ENCODE measurements at regions of chr4 and their contacts with region 1.

Region 1: GRCh38 chr4:189124149-189124758 is 816.4 kb upstream of the FRG1 start:
- DNase-seq: peak; percentile 47
- H3K4me3 Mint-ChIP-seq: no peak overlapping the region
- H3K27ac Mint-ChIP-seq: no peak overlapping the region
- H3K4me1 Mint-ChIP-seq: no peaks in the 10 kb centered on the region
- H3K27me3 Mint-ChIP-seq: no peaks in the 10 kb centered on the region
- CTCF ChIP-seq: peak; percentile 71

Region 2: DNA sequence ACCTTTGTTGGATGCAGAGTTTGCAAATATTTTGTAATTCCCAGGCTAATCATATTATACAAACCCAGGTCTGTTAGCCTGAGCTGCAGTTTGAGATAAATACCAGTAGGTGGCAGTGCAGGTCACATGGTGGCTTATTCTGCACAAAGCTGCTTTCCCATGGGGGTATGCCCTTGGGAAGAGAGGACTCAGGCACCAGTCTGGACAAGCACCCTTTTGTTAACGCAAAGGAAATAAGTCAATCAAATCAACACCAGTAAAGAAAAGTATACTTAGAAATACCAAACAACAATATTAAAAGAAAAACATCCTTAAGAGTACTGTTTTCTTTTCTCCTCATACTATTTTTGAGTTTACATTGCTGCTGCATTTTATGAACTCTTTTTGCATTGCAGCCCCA is 1517.7 kb before region 1 on chr4:
- CTCF ChIA-PET with region 1: interaction called, 4 read pairs
- POLR2A ChIA-PET with region 1: no interaction called
- intact Hi-C with region 1: loop called (anchors 1 kb)
- DNase-seq: peak; percentile 71
- H3K4me3 Mint-ChIP-seq: no peak overlapping the region
- H3K27ac Mint-ChIP-seq: no peak overlapping the region
- H3K4me1 Mint-ChIP-seq: peaks cover 25% of the 10 kb centered on the region
- H3K27me3 Mint-ChIP-seq: no peaks in the 10 kb centered on the region
- CTCF ChIP-seq: peak; percentile 90

Region 3: DNA sequence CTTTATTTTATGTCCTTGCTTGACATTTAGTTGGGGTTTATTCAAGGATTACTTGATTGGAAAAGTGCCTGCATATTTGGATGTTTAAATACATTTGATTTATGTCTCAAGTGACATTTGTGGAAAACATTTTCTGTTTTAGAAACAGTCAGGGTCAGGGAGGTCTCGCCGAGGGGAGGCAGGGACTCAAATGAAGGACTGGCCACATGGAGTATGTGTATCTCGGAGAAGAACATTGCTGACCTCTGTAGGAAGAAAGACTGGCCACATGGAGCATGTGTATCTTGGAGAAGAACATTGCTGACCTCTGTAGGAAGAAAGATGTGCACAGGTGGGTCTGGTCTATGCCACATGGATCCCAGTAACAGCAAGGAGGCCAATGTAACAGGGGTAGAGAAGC is 751.4 kb before region 1 on chr4:
- CTCF ChIA-PET with region 1: no interaction called
- POLR2A ChIA-PET with region 1: no interaction called
- intact Hi-C with region 1: loop called (anchors 1 kb)
- DNase-seq: peak; percentile 59
- H3K4me3 Mint-ChIP-seq: no peak overlapping the region
- H3K27ac Mint-ChIP-seq: peak overlapping the region; percentile 68
- H3K4me1 Mint-ChIP-seq: peaks cover 5% of the 10 kb centered on the region
- H3K27me3 Mint-ChIP-seq: no peaks in the 10 kb centered on the region
- CTCF ChIP-seq: peak; percentile 53

Region 4: DNA sequence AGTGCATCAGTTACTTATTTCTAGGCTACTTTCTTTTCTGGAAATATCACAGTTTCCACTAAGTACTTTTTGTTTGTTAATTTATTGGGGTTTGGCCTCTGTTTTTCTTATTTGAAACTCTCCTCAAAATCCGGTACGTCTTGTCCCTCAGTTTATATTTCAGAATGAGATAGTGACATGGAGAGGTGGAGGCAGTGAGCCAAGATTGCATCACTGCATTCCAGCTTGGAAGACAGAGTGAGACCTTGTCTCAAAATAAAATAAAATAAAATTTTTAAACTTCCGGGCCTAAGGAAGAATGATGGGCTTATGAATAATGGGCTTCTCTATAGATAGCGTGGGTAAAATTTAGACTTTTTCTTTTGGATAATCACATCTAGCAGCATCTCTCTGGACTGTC is 417.2 kb before region 1 on chr4:
- CTCF ChIA-PET with region 1: interaction called, 4 read pairs
- POLR2A ChIA-PET with region 1: no interaction called
- intact Hi-C with region 1: loop called (anchors 10 kb)
- DNase-seq: no peak
- H3K4me3 Mint-ChIP-seq: no peak overlapping the region
- H3K27ac Mint-ChIP-seq: peak overlapping the region; percentile 82
- H3K4me1 Mint-ChIP-seq: peaks cover 16% of the 10 kb centered on the region
- H3K27me3 Mint-ChIP-seq: no peaks in the 10 kb centered on the region
- CTCF ChIP-seq: no peak

Region 5: GRCh38 chr4:188971125-188971524 is 153.1 kb before region 1 on chr4:
- CTCF ChIA-PET with region 1: interaction called, 29 read pairs
- POLR2A ChIA-PET with region 1: interaction called, 3 read pairs
- intact Hi-C with region 1: loop called (anchors 1 kb)
- DNase-seq: peak; percentile 57
- H3K4me3 Mint-ChIP-seq: no peak overlapping the region
- H3K27ac Mint-ChIP-seq: no peak overlapping the region
- H3K4me1 Mint-ChIP-seq: no peaks in the 10 kb centered on the region
- H3K27me3 Mint-ChIP-seq: no peaks in the 10 kb centered on the region
- CTCF ChIP-seq: peak; percentile 36

Region 6: GRCh38 chr4:189177130-189177529 is 52.9 kb after region 1 on chr4:
- CTCF ChIA-PET with region 1: no interaction called
- POLR2A ChIA-PET with region 1: no interaction called
- intact Hi-C with region 1: no loop called
- DNase-seq: peak; percentile 15
- H3K4me3 Mint-ChIP-seq: no peak overlapping the region
- H3K27ac Mint-ChIP-seq: no peak overlapping the region
- H3K4me1 Mint-ChIP-seq: no peaks in the 10 kb centered on the region
- H3K27me3 Mint-ChIP-seq: no peaks in the 10 kb centered on the region
- CTCF ChIP-seq: no peak

Region 7: GRCh38 chr4:189792924-189793618 is 668.8 kb after region 1 on chr4:
- CTCF ChIA-PET with region 1: interaction called, 5 read pairs
- POLR2A ChIA-PET with region 1: no interaction called
- intact Hi-C with region 1: loop called (anchors 5 kb)
- DNase-seq: peak; percentile 57
- H3K4me3 Mint-ChIP-seq: peak overlapping the region; percentile 45
- H3K27ac Mint-ChIP-seq: no peak overlapping the region
- H3K4me1 Mint-ChIP-seq: peaks cover 10% of the 10 kb centered on the region
- H3K27me3 Mint-ChIP-seq: no peaks in the 10 kb centered on the region
- CTCF ChIP-seq: peak; percentile 93